ENCODE measurements at regions of chr2 and their contacts with region 1.

Region 1: DNA sequence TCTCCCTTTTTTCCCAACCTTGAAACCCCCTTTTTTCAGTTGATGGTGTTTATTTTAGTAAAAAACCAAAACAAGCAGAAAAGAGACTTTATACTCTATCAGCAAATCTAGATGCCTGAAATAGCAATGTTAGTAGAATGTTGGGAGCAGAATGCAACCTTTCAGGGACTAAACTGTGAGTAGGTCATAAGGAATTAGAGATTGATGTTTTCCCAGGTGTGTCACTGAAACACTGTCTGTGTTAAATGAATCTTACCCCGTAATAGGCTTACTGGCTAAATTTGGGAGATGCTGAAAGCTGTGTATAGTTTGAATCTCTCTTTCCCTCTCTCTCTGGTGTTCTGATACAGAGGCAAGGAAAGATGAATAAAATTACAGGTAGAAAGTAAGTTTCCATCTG is 43.8 kb downstream of the AGFG1 start:
- DNase-seq: no peak
- H3K4me3 ChIP-seq: no peak overlapping the region
- H3K27ac ChIP-seq: no peak overlapping the region
- H3K4me1 ChIP-seq: no peaks in the 10 kb centered on the region
- CTCF ChIP-seq: no peak

Region 2: DNA sequence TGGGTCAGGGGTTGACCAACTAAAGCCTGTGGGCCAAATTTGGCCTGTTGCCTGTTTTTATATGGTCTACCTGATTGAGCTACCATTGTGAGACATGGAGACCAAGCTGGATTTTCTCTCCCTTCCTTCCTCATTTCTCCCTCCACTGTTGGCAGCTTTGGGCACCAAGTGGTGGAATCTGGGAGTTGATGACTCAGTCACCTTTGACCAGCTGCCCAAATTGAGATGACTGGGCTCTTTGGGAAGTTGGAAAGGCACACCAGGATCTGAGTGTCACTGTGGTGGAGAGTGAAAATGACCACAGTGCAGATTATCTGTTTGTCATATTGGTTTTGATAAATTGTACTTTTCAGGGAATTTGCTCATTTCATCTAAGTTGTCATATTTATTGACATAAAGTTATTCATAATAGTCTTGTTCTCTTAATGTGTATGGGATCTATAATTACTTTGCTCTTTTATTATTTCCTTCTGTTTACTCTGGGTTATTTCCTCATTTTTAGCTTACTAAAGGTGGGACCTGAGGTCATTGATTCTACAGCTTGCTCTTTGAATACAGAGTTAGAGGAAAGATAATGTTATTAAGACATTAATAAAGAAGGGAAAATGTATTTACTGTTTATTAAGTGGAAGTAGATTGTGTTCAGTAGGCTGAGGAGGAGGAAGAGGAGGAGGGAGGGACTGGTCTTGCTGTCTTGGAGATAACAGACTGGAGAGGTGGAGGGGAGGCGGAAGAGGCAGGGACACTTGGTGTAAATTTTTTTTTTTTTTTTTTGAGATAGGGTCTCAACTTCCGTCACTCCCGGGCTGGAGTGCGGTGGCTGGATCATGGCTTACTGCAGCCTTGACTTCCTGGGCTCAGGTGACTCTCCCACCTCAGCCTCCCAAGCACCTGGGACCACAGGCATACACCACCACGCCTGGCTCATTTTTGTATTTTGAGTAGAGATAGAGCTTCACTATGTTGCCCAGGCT is 12.0 kb before region 1 on chr2:
- CTCF ChIA-PET with region 1: no interaction called
- POLR2A ChIA-PET with region 1: interaction called, 17 read pairs
- intact Hi-C with region 1: no loop called
- DNase-seq: no peak
- H3K4me3 ChIP-seq: no peak overlapping the region
- H3K27ac ChIP-seq: no peak overlapping the region
- H3K4me1 ChIP-seq: no peaks in the 10 kb centered on the region
- CTCF ChIP-seq: no peak

Region 3: GRCh38 chr2:227528803-227529202 is 13.1 kb after region 1 on chr2:
- CTCF ChIA-PET with region 1: no interaction called
- POLR2A ChIA-PET with region 1: interaction called, 12 read pairs
- intact Hi-C with region 1: no loop called
- DNase-seq: no peak
- H3K4me3 ChIP-seq: no peak overlapping the region
- H3K27ac ChIP-seq: no peak overlapping the region
- H3K4me1 ChIP-seq: no peaks in the 10 kb centered on the region
- CTCF ChIP-seq: no peak

Measured in OCI-LY7 (cell line).